ENCODE measurements at regions of chr5 and their contacts with region 1.

Region 1: DNA sequence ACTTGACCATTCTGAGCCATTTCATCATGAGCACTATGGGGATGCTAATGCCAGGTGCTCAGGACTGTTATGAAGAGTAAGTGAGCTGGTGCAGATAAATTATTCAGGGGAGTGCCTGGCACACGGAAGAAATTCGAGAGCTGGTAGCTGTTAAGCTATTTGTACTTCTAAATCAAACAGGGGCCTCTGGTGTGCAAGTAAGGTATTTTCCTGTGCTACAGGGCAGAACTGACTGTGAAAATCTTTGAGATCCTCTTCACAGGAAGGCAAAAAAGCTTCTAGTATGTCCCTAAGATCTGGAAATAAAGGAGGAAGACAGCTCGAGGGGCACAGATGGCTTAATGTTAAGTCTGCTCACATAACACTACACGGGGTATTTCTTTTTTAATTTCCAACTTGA is 106.3 kb upstream of the SPOCK1 start:
- DNase-seq: no peak
- ATAC-seq: peak; percentile 40; the same call in 1 of the 2 replicates
- H3K4me3 ChIP-seq: no peak overlapping the region
- H3K27ac ChIP-seq: no peak overlapping the region
- H3K4me1 ChIP-seq: no peaks in the 10 kb centered on the region
- H3K27me3 ChIP-seq: peaks cover 85% of the 10 kb centered on the region
- CTCF ChIP-seq: 0 out of 6 replicates have a peak, but pooled peaks of 1 of the 3 experiments have one; percentile 3
- POLR2A ChIP-seq: no peak
- RAD21 ChIP-seq: no peak

Region 2: GRCh38 chr5:137320056-137321045 is 285.1 kb before region 1 on chr5:
- CTCF ChIA-PET with region 1: interaction called, 10 read pairs
- POLR2A ChIA-PET with region 1: no interaction called
- RAD21 ChIA-PET with region 1: interaction called in 1 of 2 experiments, 3 read pairs
- intact Hi-C with region 1: no loop called
- DNase-seq: peak; percentile 21
- ATAC-seq: peak; percentile 59
- H3K4me3 ChIP-seq: no peak overlapping the region
- H3K27ac ChIP-seq: no peak overlapping the region
- H3K4me1 ChIP-seq: no peaks in the 10 kb centered on the region
- H3K27me3 ChIP-seq: peaks cover 69% of the 10 kb centered on the region
- CTCF ChIP-seq: peak; percentile 63 to 77 (median 69); a peak in 5 of 6 replicates
- POLR2A ChIP-seq: no peak
- RAD21 ChIP-seq: peak; percentile 65

Measured in HCT116 (cell line).